ENCODE measurements at regions of chr18 and their contacts with region 1.

Region 1: DNA sequence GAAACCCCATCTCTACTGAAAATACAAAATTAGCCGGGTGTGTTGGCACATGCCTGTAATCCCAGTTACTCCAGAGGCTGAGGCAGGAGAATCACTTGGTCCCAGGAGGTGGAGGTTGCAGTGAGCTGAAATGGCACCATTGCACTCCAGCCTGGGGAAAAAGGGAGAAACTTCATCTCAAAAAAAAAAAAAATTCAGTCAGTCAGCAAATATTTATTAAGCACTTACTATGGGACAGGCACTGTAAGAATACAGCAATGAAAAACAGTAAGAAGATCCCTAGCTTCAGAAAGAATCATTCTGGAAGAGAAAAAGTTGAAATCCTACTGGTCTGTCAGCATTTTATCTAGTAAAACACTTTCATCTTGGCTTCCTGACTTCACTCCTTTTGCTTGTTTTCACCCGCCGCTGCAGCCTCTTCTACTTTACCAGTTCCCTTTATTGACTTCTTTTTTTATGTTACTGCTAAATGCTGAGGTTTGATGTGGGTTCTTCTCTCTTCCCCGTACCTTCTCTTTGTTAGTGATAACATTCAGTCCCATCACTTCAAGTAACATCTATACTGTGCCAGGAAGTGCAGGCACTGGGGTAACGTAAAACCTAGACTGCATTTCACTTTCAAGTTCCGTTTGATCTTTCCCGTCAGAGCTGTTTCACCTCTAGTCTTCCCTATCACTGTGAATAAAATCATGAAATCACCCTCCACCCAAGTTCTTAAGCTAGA is 10.8 kb upstream of the TAF4B start:
- DNase-seq: peak; percentile 68 to 80 (median 75)
- H3K4me3 ChIP-seq: peak overlapping the region in 1 of 2 donors; percentile 30
- H3K4me3 Mint-ChIP-seq: peak overlapping the region; percentile 67 to 83 (median 77)
- H3K27ac ChIP-seq: peak overlapping the region; percentile 51
- H3K27ac Mint-ChIP-seq: peak overlapping the region; percentile 52 to 90 (median 80)
- H3K4me1 ChIP-seq: peaks cover 24% of the 10 kb centered on the region
- H3K4me1 Mint-ChIP-seq: peaks cover 19 to 21% (median 20%) of the 10 kb centered on the region in 4 donors
- H3K27me3 ChIP-seq: no peaks in the 10 kb centered on the region
- H3K27me3 Mint-ChIP-seq: no peaks in the 10 kb centered on the region

Region 2: GRCh38 chr18:26190506-26190905 is 24.9 kb before region 1 on chr18:
- CTCF ChIA-PET with region 1: interaction called, 5 read pairs
- POLR2A ChIA-PET with region 1: no interaction called
- intact Hi-C with region 1: loop called (anchors 1 kb)
- DNase-seq: peak in 4 of 5 donors; percentile 30 to 45 (median 38)
- H3K4me3 ChIP-seq: peak overlapping the region in 1 of 2 donors; percentile 44
- H3K4me3 Mint-ChIP-seq: peak overlapping the region; percentile 80 to 90 (median 86)
- H3K27ac ChIP-seq: peak overlapping the region; percentile 15
- H3K27ac Mint-ChIP-seq: peak overlapping the region; percentile 77 to 91 (median 85)
- H3K4me1 ChIP-seq: peaks cover 16% of the 10 kb centered on the region
- H3K4me1 Mint-ChIP-seq: peaks cover 9 to 23% (median 19%) of the 10 kb centered on the region in 4 donors
- H3K27me3 ChIP-seq: no peaks in the 10 kb centered on the region
- H3K27me3 Mint-ChIP-seq: no peaks in the 10 kb centered on the region

Region 3: DNA sequence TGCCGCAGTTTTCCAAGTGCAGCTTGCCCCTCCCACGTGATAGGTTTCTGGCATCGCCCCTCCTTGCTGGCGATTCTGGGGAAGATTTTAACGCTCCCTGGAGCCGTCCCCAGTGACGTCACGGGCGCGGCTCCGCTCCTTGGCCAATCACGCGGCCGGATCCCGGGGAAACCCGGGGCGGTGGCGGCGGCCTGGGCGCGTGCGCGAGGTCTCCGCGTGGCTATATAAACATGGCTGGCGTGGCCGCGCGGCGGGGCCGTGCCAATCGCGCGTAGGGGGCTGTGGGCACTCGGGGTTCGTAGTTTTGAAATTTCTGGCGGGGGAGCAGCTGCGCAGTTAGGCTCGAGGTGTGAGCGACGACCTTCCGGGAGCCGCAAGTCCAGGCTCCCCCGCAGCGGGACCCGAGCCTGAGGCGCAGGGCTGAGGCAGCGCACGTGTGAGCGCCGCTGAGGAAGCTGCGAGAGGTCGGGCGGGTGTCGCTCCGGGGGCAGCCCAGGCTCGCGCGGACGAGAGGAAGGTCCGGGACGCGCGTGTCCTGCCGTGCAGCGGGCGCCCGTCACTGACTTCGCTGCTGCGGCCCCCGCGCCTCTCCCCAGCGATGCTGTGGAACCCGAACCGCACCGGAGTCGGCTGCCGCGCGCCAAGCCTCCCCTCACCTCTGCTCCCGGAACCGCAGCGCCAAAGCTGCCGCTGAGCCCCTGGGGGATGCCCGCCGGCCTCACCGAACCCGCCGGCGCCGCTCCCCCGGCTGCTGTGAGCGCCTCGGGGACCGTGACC is 11.0 kb after region 1 on chr18 and contains the start of gene TAF4B:
- CTCF ChIA-PET with region 1: interaction called, 3 read pairs
- POLR2A ChIA-PET with region 1: interaction called, 37 read pairs
- intact Hi-C with region 1: loop called (anchors 1 kb)
- DNase-seq: peak; percentile 89 to 93 (median 90)
- H3K4me3 ChIP-seq: peak within 1 kb of the TSS; percentile 13 to 71
- H3K4me3 Mint-ChIP-seq: peak within 1 kb of the TSS; percentile 91 to 97 (median 95)
- H3K27ac ChIP-seq: peak within 1 kb of the TSS; percentile 80
- H3K27ac Mint-ChIP-seq: peak within 1 kb of the TSS; percentile 91 to 98 (median 98)
- H3K4me1 ChIP-seq: peaks cover 28% of the 10 kb centered on the region
- H3K4me1 Mint-ChIP-seq: peaks cover 19 to 42% (median 26%) of the 10 kb centered on the region in 4 donors
- H3K27me3 ChIP-seq: no peaks in the 10 kb centered on the region
- H3K27me3 Mint-ChIP-seq: no peaks in the 10 kb centered on the region
- total RNA-seq, gene TAF4B: 7.2 to 8.1 TPM

Region 4: GRCh38 chr18:26614374-26614773 is 399.0 kb after region 1 on chr18:
- CTCF ChIA-PET with region 1: no interaction called
- POLR2A ChIA-PET with region 1: no interaction called
- intact Hi-C with region 1: no loop called
- DNase-seq: no peak
- H3K4me3 ChIP-seq: no peak overlapping the region
- H3K4me3 Mint-ChIP-seq: no peak overlapping the region
- H3K27ac ChIP-seq: no peak overlapping the region
- H3K27ac Mint-ChIP-seq: no peak overlapping the region
- H3K4me1 ChIP-seq: no peaks in the 10 kb centered on the region
- H3K4me1 Mint-ChIP-seq: peaks cover 0 to 3% (median 0%) of the 10 kb centered on the region in 4 donors
- H3K27me3 ChIP-seq: no peaks in the 10 kb centered on the region
- H3K27me3 Mint-ChIP-seq: peaks cover 3 to 4% of the 10 kb centered on the region in 2 donors

Measured in CD4-positive, alpha-beta memory T cell (primary cell).